ENCODE measurements at regions of chr6 and their contacts with region 1.

Region 1: DNA sequence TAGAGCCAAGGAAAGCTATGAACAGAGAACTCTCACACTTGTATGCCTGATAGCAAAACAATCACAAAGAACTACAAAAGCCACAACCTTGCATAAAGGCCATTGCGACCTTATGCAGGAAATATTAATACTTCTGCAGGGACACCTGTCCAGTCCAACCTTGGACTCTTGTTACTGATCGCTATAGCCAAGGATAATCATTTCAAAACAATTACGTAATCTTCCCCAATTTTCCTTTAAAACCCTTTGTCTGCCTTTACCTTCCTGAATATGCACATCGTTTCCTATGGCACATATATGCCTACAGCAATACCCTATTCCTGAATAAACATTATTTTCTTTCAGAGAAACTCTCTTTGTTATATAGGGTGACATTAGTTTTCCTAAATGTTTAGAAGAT is 22.8 kb downstream of the PPIL6 start:
- DNase-seq: no peak
- ATAC-seq: no peak
- H3K4me3 ChIP-seq: no peak overlapping the region
- H3K27ac ChIP-seq: no peak overlapping the region
- H3K4me1 ChIP-seq: no peaks in the 10 kb centered on the region
- H3K27me3 ChIP-seq: peaks cover 4% of the 10 kb centered on the region
- CTCF ChIP-seq: no peak
- POLR2A ChIP-seq: no peak
- RAD21 ChIP-seq: no peak

Region 2: GRCh38 chr6:108748055-108748454 is 669.6 kb before region 1 on chr6:
- CTCF ChIA-PET with region 1: no interaction called
- POLR2A ChIA-PET with region 1: no interaction called
- dilution Hi-C with region 1: no loop called
- in situ Hi-C with region 1: no loop called
- intact Hi-C with region 1: loop called (anchors 5 kb)
- DNase-seq: peak; percentile 49
- ATAC-seq: no peak
- H3K4me3 ChIP-seq: no peak overlapping the region
- H3K27ac ChIP-seq: no peak overlapping the region
- H3K4me1 ChIP-seq: no peaks in the 10 kb centered on the region
- H3K27me3 ChIP-seq: no peaks in the 10 kb centered on the region
- CTCF ChIP-seq: no peak
- POLR2A ChIP-seq: no peak
- RAD21 ChIP-seq: no peak

Region 3: DNA sequence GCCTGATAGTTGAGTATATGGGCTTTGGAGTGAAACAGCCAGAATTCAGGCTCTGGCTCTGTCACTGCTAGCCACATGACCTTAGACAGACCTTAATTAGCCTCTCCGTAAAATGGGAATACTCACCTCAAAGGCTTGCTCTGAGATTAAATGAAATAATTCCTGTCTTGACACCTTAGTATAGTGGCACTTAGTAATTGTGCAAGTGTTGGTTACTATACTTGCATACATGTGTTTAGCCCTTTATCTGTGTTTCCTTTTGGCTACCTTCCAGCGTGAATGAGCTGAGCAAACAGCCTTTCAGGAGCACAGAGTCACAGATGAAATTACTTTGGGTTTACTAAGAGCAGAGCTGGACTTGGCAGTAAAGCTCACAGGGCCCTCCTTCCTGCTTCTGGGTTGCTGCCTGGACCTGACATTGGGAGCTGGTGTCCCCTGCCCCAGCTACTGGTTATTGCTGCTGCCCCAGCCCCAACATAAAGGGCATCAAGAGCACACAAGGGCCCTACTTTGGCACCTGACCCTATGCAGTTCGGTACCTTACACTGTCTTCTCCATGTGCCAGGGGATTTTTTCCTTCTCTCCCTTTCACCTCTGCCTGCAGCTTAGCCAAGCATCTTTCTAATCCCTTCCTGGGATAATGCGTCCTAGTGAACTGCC is 68.1 kb before region 1 on chr6:
- CTCF ChIA-PET with region 1: no interaction called
- POLR2A ChIA-PET with region 1: no interaction called
- dilution Hi-C with region 1: no loop called
- in situ Hi-C with region 1: no loop called
- intact Hi-C with region 1: no loop called
- DNase-seq: peak; percentile 82
- ATAC-seq: peak; percentile 75
- H3K4me3 ChIP-seq: no peak overlapping the region
- H3K27ac ChIP-seq: no peak overlapping the region
- H3K4me1 ChIP-seq: peaks cover 4% of the 10 kb centered on the region; the same call in 1 of the 2 replicates
- H3K27me3 ChIP-seq: no peaks in the 10 kb centered on the region
- CTCF ChIP-seq: no peak
- POLR2A ChIP-seq: no peak
- RAD21 ChIP-seq: no peak

Region 4: GRCh38 chr6:109440331-109441068 is 22.9 kb after region 1 on chr6 and contains the starts of genes PPIL6 and SMPD2:
- CTCF ChIA-PET with region 1: interaction called, 10 read pairs
- POLR2A ChIA-PET with region 1: no interaction called
- dilution Hi-C with region 1: no loop called
- in situ Hi-C with region 1: no loop called
- intact Hi-C with region 1: no loop called
- DNase-seq: peak; percentile 87
- ATAC-seq: peak; percentile 90
- H3K4me3 ChIP-seq: peak within 1 kb of the TSS; percentile 70
- H3K27ac ChIP-seq: peak within 1 kb of the TSS; percentile 48
- H3K4me1 ChIP-seq: peaks cover 8% of the 10 kb centered on the region
- H3K27me3 ChIP-seq: no peaks in the 10 kb centered on the region
- CTCF ChIP-seq: peak; percentile 46
- POLR2A ChIP-seq: peak; percentile 61
- RAD21 ChIP-seq: no peak
- total RNA-seq, gene PPIL6: 0.18 and 1.4 TPM in 2 replicates
- total RNA-seq, gene SMPD2: 8.3 and 9.0 TPM in 2 replicates

Measured in IMR-90 (cell line).